Activated B cell treated with CpG ODN at 0.5 μM for 24 hours (primary cell): ENCODE measurements at regions of chr1 and their contacts with region 1.

Region 1: GRCh38 chr1:179365320-179366092 is at the start of gene AXDND1:
- DNase-seq: peak; percentile 83
- ATAC-seq: peak; percentile 91
- H3K4me3 Mint-ChIP-seq: peak within 1 kb of the TSS; percentile 98
- H3K27ac Mint-ChIP-seq: peak within 1 kb of the TSS; percentile 100
- H3K4me1 Mint-ChIP-seq: peaks cover 11% of the 10 kb centered on the region
- H3K27me3 Mint-ChIP-seq: no peaks in the 10 kb centered on the region
- CTCF ChIP-seq: no peak
- total RNA-seq, gene AXDND1: 0.61 and 0.75 TPM in 2 replicates

Region 2: DNA sequence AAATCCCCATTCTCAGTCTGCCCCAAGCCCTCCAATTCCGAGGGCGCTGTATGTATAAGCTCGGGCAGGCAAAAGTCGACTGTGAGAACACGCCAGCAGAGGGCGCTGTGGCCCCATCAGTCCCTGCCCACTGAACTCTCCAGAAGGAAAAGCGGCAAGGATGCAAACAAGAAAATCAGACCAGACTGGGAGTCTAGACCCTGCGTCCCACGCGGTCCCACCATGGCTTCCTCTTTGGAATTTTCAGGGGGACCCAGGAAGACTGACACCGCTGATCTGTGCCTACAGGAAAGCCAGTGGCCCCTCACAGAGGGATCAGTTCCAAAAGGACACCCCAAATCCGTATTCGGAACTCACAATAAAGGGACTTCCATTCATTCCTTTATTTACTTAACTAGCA is 833.1 kb before region 1 on chr1:
- CTCF ChIA-PET with region 1: interaction called, 22 read pairs
- POLR2A ChIA-PET with region 1: no interaction called
- intact Hi-C with region 1: loop called (anchors 1 kb)
- DNase-seq: peak; percentile 77
- ATAC-seq: peak; percentile 93
- H3K4me3 Mint-ChIP-seq: no peak overlapping the region
- H3K27ac Mint-ChIP-seq: no peak overlapping the region
- H3K4me1 Mint-ChIP-seq: peaks cover 4% of the 10 kb centered on the region
- H3K27me3 Mint-ChIP-seq: no peaks in the 10 kb centered on the region
- CTCF ChIP-seq: peak; percentile 84

Region 3: DNA sequence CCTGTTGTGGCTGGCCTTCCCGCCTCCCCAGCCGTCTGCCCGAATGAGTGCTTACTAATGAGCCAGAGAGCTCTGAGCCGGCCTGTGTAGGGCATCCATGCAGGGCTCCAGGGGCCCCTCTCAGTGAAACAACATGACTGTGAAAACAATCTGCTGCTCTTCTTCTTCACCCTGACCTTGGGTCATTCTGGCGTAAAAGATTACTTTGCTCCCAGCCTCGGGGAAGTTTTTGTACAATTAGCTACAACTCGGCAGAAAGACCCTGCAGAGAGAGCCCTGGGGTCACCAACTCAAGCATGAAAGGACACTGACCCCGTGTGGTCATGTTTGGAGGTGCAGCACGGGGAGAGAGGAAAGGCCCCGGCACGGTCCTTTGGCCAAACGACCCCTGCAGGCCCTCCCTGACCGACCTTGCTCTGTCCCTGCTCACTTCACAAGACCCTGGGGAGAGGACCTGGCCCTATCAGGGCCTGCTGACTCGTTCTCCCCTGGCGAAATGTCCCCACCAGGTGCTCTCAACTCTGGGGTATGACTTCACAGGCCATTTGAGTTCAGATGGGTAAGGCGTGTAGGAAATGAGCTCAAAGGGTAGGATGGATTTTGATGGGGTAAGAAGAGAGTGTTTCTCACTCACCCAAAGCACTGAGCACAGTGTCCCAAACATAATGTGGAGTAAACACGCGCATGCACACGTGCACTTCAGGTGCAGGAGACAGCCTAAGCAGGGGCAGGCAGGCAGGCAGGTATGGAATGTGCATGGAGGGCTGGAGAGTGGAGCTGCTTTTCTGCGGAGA is 362.8 kb before region 1 on chr1:
- CTCF ChIA-PET with region 1: interaction called, 20 read pairs
- POLR2A ChIA-PET with region 1: interaction called, 6 read pairs
- intact Hi-C with region 1: no loop called
- DNase-seq: peak; percentile 79
- ATAC-seq: peak; percentile 95
- H3K4me3 Mint-ChIP-seq: peak overlapping the region; percentile 26
- H3K27ac Mint-ChIP-seq: no peak overlapping the region
- H3K4me1 Mint-ChIP-seq: peaks cover 15% of the 10 kb centered on the region
- H3K27me3 Mint-ChIP-seq: no peaks in the 10 kb centered on the region
- CTCF ChIP-seq: peak; percentile 96

Region 4: GRCh38 chr1:179121159-179121938 is 244.2 kb before region 1 on chr1:
- CTCF ChIA-PET with region 1: interaction called, 52 read pairs
- POLR2A ChIA-PET with region 1: interaction called, 4 read pairs
- intact Hi-C with region 1: loop called (anchors 1 kb)
- DNase-seq: no peak
- ATAC-seq: peak; percentile 47
- H3K4me3 Mint-ChIP-seq: no peak overlapping the region
- H3K27ac Mint-ChIP-seq: no peak overlapping the region
- H3K4me1 Mint-ChIP-seq: peaks cover 8% of the 10 kb centered on the region
- H3K27me3 Mint-ChIP-seq: no peaks in the 10 kb centered on the region
- CTCF ChIP-seq: peak; percentile 66

Region 5: GRCh38 chr1:179278920-179279319 is 86.6 kb before region 1 on chr1:
- CTCF ChIA-PET with region 1: no interaction called
- POLR2A ChIA-PET with region 1: no interaction called
- intact Hi-C with region 1: no loop called
- DNase-seq: no peak
- ATAC-seq: no peak
- H3K4me3 Mint-ChIP-seq: no peak overlapping the region
- H3K27ac Mint-ChIP-seq: no peak overlapping the region
- H3K4me1 Mint-ChIP-seq: no peaks in the 10 kb centered on the region
- H3K27me3 Mint-ChIP-seq: peaks cover 4% of the 10 kb centered on the region
- CTCF ChIP-seq: no peak

Region 6: DNA sequence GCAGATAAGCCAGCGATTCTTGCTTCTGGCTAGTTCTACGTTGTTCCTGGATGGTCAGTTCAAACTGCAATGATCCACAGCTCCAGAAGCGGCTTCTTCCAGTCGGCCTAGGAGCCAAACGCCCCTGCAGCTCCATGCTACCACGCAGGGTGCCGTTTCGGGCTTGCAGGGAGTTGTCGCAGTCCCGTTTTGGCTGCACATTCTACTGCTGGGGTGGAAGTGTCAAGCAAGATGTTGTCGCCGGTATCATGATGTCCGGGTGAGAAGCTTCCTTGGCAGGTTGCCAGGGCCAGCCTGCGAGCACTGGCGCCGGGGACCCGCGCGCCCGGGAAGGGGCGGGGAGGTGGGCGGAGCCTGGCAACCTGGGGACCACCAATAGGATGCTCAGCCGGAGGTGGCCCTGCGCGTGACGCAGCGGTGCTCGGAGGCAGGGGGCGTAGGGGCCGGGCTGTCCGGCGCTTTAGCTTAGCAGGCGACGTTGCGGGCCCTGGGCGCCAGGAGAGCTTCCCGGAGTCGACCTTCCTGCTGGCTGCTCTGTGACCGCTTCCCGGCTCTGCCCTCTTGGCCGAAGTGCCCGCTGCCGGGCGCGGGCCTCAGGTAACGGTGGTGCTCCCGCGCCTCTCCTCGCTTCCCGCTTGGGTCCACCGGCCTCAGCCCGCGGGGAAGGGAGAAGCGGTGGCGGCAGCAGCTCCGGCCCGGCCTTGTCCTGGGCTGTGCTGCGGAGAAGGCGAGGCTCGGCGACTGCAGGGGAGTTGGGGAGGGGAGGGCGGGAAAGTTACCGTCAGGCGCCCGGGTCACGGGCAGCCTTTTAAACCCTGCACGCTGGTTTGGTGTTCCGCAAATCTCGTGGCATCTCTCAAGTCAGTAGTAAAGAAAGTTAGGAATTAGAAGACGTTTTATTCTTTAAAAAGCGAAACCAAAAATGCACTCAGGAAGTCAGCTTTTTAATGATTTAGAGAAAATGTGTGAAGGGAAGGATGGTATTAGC is 71.9 kb before region 1 on chr1 and contains the start of gene SOAT1:
- CTCF ChIA-PET with region 1: no interaction called
- POLR2A ChIA-PET with region 1: interaction called, 20 read pairs
- intact Hi-C with region 1: loop called (anchors 1 kb)
- DNase-seq: peak; percentile 92
- ATAC-seq: peak; percentile 99
- H3K4me3 Mint-ChIP-seq: peak within 1 kb of the TSS; percentile 97
- H3K27ac Mint-ChIP-seq: peak within 1 kb of the TSS; percentile 93
- H3K4me1 Mint-ChIP-seq: peaks cover 44% of the 10 kb centered on the region
- H3K27me3 Mint-ChIP-seq: no peaks in the 10 kb centered on the region
- CTCF ChIP-seq: no peak
- total RNA-seq, gene SOAT1: 17.3 and 20.0 TPM in 2 replicates

Region 7: GRCh38 chr1:179954493-179955297 is 589.2 kb after region 1 on chr1 and contains the start of gene CEP350:
- CTCF ChIA-PET with region 1: no interaction called
- POLR2A ChIA-PET with region 1: no interaction called
- intact Hi-C with region 1: loop called (anchors 5 kb)
- DNase-seq: peak; percentile 91
- ATAC-seq: peak; percentile 90
- H3K4me3 Mint-ChIP-seq: peak within 1 kb of the TSS; percentile 81
- H3K27ac Mint-ChIP-seq: peak within 1 kb of the TSS; percentile 90
- H3K4me1 Mint-ChIP-seq: peaks cover 57% of the 10 kb centered on the region
- H3K27me3 Mint-ChIP-seq: no peaks in the 10 kb centered on the region
- CTCF ChIP-seq: no peak
- total RNA-seq, gene CEP350: 60.8 and 63.9 TPM in 2 replicates

Region 8: GRCh38 chr1:181021811-181022434 is 1656.4 kb after region 1 on chr1:
- CTCF ChIA-PET with region 1: no interaction called
- POLR2A ChIA-PET with region 1: no interaction called
- intact Hi-C with region 1: loop called (anchors 10 kb)
- DNase-seq: no peak
- ATAC-seq: peak; percentile 37
- H3K4me3 Mint-ChIP-seq: peak overlapping the region; percentile 96
- H3K27ac Mint-ChIP-seq: peak overlapping the region; percentile 94
- H3K4me1 Mint-ChIP-seq: peaks cover 40% of the 10 kb centered on the region
- H3K27me3 Mint-ChIP-seq: no peaks in the 10 kb centered on the region
- CTCF ChIP-seq: no peak

Region 9: GRCh38 chr1:181369416-181369815 is 2003.9 kb after region 1 on chr1:
- CTCF ChIA-PET with region 1: no interaction called
- POLR2A ChIA-PET with region 1: no interaction called
- intact Hi-C with region 1: no loop called
- DNase-seq: no peak
- ATAC-seq: no peak
- H3K4me3 Mint-ChIP-seq: no peak overlapping the region
- H3K27ac Mint-ChIP-seq: no peak overlapping the region
- H3K4me1 Mint-ChIP-seq: no peaks in the 10 kb centered on the region
- H3K27me3 Mint-ChIP-seq: peaks cover 3% of the 10 kb centered on the region
- CTCF ChIP-seq: no peak